ENCODE measurements at regions of chr22 and their contacts with region 1.

Region 1: GRCh38 chr22:27937453-27937852 is 18.4 kb upstream of the PITPNB start:
- DNase-seq: peak; percentile 21
- ATAC-seq: peak; percentile 78
- H3K4me3 ChIP-seq: no peak overlapping the region
- H3K27ac ChIP-seq: no peak overlapping the region
- H3K4me1 ChIP-seq: no peaks in the 10 kb centered on the region
- H3K27me3 ChIP-seq: no peaks in the 10 kb centered on the region
- CTCF ChIP-seq: no peak
- EP300 ChIP-seq: no peak
- POLR2A ChIP-seq: no peak
- RAD21 ChIP-seq: no peak

Region 2: DNA sequence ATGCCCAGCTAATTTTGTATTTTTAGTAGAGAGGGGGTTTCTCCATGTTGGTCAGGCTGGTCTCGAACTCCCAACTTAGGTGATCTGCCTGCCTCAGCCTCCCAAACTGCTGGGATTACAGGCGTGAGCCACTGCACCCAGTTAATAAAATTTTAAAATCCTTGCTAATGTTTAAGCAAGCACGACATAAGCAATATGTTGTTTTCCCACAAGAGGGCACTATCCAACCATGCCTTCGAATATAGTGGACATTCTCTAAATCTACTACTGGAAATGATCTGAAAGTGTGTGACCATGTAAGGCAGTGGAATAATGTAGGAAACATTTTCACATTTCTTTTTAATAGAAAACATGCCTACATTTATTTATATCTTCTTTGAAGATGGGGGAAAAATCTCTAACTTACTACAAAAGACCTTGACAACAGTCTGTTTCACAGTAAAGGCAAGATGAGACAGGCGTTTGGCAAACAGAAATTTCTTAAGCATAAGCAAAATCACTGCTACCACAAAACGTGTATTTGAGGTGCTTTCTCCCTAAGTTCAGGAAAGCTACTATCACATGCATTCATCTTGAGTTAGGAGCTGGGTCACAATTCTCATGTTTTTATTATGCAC is 56.6 kb before region 1 on chr22:
- CTCF ChIA-PET with region 1: interaction called, 8 read pairs
- POLR2A ChIA-PET with region 1: no interaction called
- in situ Hi-C with region 1: no loop called
- intact Hi-C with region 1: loop called (anchors 1 kb)
- DNase-seq: peak; percentile 56
- ATAC-seq: peak; percentile 77
- H3K4me3 ChIP-seq: no peak overlapping the region
- H3K27ac ChIP-seq: no peak overlapping the region
- H3K4me1 ChIP-seq: peaks cover 40% of the 10 kb centered on the region
- H3K27me3 ChIP-seq: no peaks in the 10 kb centered on the region
- CTCF ChIP-seq: peak; percentile 78
- EP300 ChIP-seq: no peak
- POLR2A ChIP-seq: no peak
- RAD21 ChIP-seq: peak; percentile 64; the same call in 1 of the 2 replicates

Region 3: GRCh38 chr22:27962268-27963044 is 25.0 kb after region 1 on chr22:
- CTCF ChIA-PET with region 1: no interaction called
- POLR2A ChIA-PET with region 1: no interaction called
- in situ Hi-C with region 1: no loop called
- intact Hi-C with region 1: no loop called
- DNase-seq: no peak
- ATAC-seq: no peak
- H3K4me3 ChIP-seq: no peak overlapping the region
- H3K27ac ChIP-seq: no peak overlapping the region
- H3K4me1 ChIP-seq: peaks cover 26% of the 10 kb centered on the region
- H3K27me3 ChIP-seq: no peaks in the 10 kb centered on the region
- CTCF ChIP-seq: no peak
- EP300 ChIP-seq: no peak
- POLR2A ChIP-seq: no peak
- RAD21 ChIP-seq: no peak

Region 4: GRCh38 chr22:28009272-28009827 is 71.9 kb after region 1 on chr22:
- CTCF ChIA-PET with region 1: no interaction called
- POLR2A ChIA-PET with region 1: no interaction called
- in situ Hi-C with region 1: no loop called
- intact Hi-C with region 1: no loop called
- DNase-seq: peak; percentile 34
- ATAC-seq: peak; percentile 91
- H3K4me3 ChIP-seq: no peak overlapping the region
- H3K27ac ChIP-seq: no peak overlapping the region
- H3K4me1 ChIP-seq: no peaks in the 10 kb centered on the region
- H3K27me3 ChIP-seq: no peaks in the 10 kb centered on the region
- CTCF ChIP-seq: peak; percentile 96
- EP300 ChIP-seq: no peak
- POLR2A ChIP-seq: no peak
- RAD21 ChIP-seq: peak; percentile 83

Region 5: GRCh38 chr22:28198692-28199091 is 261.2 kb after region 1 on chr22:
- CTCF ChIA-PET with region 1: no interaction called
- POLR2A ChIA-PET with region 1: no interaction called
- in situ Hi-C with region 1: no loop called
- intact Hi-C with region 1: no loop called
- DNase-seq: no peak
- ATAC-seq: no peak
- H3K4me3 ChIP-seq: no peak overlapping the region
- H3K27ac ChIP-seq: no peak overlapping the region
- H3K4me1 ChIP-seq: no peaks in the 10 kb centered on the region
- H3K27me3 ChIP-seq: no peaks in the 10 kb centered on the region
- CTCF ChIP-seq: no peak
- EP300 ChIP-seq: no peak
- POLR2A ChIP-seq: no peak
- RAD21 ChIP-seq: no peak

Measured in HepG2 (cell line).